GM10248 (cell line): ENCODE measurements at regions of chr11 and their contacts with region 1.

Region 1: GRCh38 chr11:123054301-123055065 is 7.5 kb downstream of the HSPA8 start:
- DNase-seq: peak; percentile 76
- CTCF ChIP-seq: peak; percentile 65

Region 2: GRCh38 chr11:122863704-122864326 is 190.7 kb before region 1 on chr11:
- CTCF ChIA-PET with region 1: interaction called, 86 read pairs
- POLR2A ChIA-PET with region 1: interaction called, 10 read pairs
- DNase-seq: no peak
- CTCF ChIP-seq: peak; percentile 82

Region 3: DNA sequence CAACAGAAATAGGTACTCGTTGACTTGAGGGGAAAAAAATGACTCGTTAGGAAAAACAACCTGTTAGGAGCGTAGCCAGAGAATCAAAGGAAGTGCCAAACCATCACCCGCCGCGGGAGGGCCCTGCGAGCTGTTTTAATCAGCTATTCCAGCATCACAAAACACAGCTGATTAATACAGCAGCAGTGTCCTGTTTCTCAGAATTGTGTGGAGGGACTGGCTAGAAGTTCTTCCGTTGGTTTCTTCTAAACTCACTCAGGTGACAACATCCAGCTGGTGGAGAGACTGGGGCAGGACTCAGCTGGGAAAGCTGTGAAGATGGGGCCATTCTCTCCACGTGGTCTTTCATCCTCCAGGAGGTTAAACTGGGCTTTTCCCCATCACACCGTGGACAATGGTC is 20.6 kb before region 1 on chr11:
- CTCF ChIA-PET with region 1: interaction called, 31 read pairs
- POLR2A ChIA-PET with region 1: interaction called, 5 read pairs
- DNase-seq: no peak
- CTCF ChIP-seq: no peak

Region 4: DNA sequence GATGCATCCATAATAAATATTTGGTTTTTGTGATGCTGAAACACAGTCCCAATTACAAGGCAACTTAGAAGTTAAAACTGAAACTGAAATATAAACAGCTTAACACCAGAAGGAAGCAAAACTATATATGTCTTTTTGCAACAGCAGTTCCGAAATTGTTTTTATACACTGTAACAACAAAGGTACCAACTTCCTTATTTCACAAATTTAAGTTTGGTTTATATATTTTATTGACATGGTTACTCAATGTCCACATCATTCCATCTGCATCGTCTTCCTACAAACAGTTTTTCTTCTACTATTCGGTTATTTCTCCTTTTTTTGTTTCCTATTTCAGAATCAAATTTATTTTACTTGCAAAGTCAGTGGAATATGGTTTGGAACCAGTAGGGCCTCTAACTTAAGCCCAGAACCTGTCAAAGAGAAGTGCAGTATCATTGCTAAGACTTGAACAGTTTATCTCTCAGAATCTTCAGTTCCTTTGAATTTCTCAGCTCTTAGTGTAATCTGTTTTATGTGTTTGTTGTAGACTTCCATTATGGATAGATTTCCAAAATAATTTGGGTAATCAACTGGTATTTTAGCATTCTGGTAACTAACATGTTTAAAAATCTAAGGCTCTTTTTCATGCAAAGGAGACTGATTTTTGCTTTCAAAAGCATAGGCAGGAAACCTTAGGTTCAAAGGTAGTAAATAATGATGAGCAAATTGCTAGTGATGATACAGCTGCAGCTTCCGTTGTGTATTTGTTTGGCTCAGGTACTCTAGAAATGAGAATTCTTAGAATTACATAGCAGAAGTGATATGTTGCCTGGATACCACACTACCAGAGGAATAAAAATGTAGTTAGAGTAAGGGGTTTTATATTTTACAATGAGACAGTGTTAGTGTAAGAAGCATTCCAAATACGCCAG is 15.7 kb after region 1 on chr11:
- CTCF ChIA-PET with region 1: interaction called, 21 read pairs
- POLR2A ChIA-PET with region 1: interaction called, 10 read pairs
- DNase-seq: peak; percentile 43
- CTCF ChIP-seq: no peak

Region 5: DNA sequence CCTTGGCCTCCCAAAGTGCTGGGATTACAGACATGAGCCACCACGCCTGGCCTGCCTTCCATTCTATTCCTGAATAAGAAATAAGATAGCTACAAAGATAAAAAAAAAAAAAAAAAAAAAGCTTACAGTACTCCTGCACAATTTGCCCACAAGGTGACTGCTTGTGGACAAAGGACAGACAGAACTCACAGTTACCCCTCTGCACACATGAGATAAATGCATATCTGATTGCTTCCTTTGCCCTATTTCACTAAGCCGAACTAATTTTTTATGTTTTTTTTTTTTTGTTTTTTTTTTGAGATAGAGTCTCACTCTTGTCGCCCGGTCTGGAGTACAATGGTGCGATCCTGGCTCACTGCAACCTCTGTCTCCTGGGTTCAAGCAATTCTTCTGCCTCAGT is 31.0 kb after region 1 on chr11:
- CTCF ChIA-PET with region 1: interaction called, 4 read pairs
- POLR2A ChIA-PET with region 1: interaction called, 16 read pairs
- DNase-seq: no peak
- CTCF ChIP-seq: no peak